ENCODE measurements at regions of chr3 and their contacts with region 1.

Region 1: DNA sequence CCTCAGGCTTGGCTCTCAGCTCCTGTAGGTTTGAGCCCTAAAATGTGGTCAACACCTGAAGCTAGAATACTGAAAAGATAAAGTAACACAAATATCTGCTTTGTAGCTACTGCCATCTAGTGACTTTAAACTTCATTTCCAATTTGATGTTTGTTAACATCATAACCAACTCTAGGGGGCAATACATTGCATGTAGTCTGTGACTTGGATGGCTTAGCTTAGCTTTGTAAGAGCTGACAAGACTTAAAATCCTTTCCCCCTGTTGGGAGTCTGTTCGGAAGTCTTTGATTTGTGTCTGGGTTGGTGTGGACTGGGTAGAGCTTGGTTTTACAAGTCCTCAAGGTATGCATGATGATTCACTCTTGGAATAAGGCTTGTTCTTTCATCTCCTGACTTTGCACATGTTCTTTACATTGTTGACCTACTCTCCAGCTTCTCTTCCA is 51.7 kb downstream of the SCN11A start:
- DNase-seq: no peak
- H3K4me3 Mint-ChIP-seq: no peak overlapping the region
- H3K27ac Mint-ChIP-seq: no peak overlapping the region
- H3K4me1 Mint-ChIP-seq: no peaks in the 10 kb centered on the region
- H3K27me3 Mint-ChIP-seq: peaks cover 13% of the 10 kb centered on the region

Region 2: GRCh38 chr3:38969317-38970235 is 30.5 kb before region 1 on chr3:
- CTCF ChIA-PET with region 1: interaction called, 11 read pairs
- POLR2A ChIA-PET with region 1: no interaction called
- DNase-seq: no peak
- H3K4me3 Mint-ChIP-seq: no peak overlapping the region
- H3K27ac Mint-ChIP-seq: no peak overlapping the region
- H3K4me1 Mint-ChIP-seq: no peaks in the 10 kb centered on the region
- H3K27me3 Mint-ChIP-seq: peaks cover 7% of the 10 kb centered on the region

Region 3: GRCh38 chr3:39011191-39011736 is 11.2 kb after region 1 on chr3:
- CTCF ChIA-PET with region 1: interaction called, 20 read pairs
- POLR2A ChIA-PET with region 1: no interaction called
- DNase-seq: no peak
- H3K4me3 Mint-ChIP-seq: no peak overlapping the region
- H3K27ac Mint-ChIP-seq: no peak overlapping the region
- H3K4me1 Mint-ChIP-seq: no peaks in the 10 kb centered on the region
- H3K27me3 Mint-ChIP-seq: peaks cover 26% of the 10 kb centered on the region

Region 4: DNA sequence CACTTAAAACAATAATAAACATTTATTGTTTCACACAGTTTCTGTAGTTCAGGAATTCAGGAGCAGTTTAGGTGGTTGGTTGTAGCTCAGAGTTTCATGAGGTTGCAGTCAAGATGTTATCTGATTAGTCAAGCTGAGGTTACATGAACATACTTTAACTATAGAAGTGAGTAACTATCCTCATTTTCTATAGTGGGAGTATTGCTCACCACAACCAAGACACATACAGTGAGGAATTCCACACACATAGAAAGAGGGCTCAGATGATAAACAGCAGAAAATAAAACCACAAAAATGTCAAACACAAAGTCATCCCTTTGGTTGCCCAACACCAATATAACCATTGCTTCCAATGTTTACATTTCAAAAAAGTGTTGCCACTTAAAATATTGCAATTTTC is 38.1 kb after region 1 on chr3:
- CTCF ChIA-PET with region 1: no interaction called
- POLR2A ChIA-PET with region 1: no interaction called
- DNase-seq: no peak
- H3K4me3 Mint-ChIP-seq: no peak overlapping the region
- H3K27ac Mint-ChIP-seq: no peak overlapping the region
- H3K4me1 Mint-ChIP-seq: peaks cover 7% of the 10 kb centered on the region
- H3K27me3 Mint-ChIP-seq: peaks cover 20% of the 10 kb centered on the region

Measured in activated CD4-positive, alpha-beta memory T cell treated with anti-CD3 and anti-CD28 coated beads, Interleukin-2, amount 10 ng/mL, durations not matched to agents 7 days and 5 days (primary cell).